Activated CD4-positive, alpha-beta memory T cell treated with anti-CD3 and anti-CD28 coated beads for 36 hours (primary cell): ENCODE measurements at regions of chr12 and their contacts with region 1.

Region 1: GRCh38 chr12:8446642-8447547 is 8.9 kb upstream of the CLEC6A start:
- DNase-seq: peak; percentile 28
- H3K4me3 Mint-ChIP-seq: no peak overlapping the region
- H3K27ac Mint-ChIP-seq: no peak overlapping the region
- H3K4me1 Mint-ChIP-seq: no peaks in the 10 kb centered on the region
- H3K27me3 Mint-ChIP-seq: peaks cover 2% of the 10 kb centered on the region

Region 2: DNA sequence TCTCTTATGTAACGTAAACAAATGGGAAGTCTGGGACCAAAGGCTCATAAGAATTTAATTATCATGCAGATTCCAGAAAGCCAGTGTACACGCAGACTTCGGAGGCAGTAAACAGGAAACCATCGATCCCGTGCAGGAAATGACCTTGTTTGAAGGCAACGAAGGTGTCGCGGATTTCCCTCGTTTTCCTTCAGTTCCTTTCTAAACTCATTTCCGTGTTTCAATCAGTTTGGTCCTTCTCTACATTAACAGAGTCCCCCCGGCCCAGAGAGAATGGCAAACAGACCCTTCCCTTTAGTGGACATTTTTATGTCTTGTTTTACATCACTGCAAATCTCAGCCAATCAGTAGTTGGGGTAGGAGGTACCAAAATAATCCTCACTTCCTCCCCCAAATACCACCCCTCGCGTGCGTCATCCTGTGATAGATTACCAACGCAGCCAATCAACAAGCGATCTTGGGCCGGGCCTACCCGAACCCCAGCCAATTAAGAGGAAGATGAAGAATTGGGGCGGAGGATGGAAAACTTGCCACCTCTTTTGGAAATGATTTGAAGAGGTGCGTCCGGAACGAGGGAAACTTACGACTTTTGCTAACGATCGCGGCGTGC is 420.5 kb before region 1 on chr12:
- CTCF ChIA-PET with region 1: no interaction called
- POLR2A ChIA-PET with region 1: no interaction called
- intact Hi-C with region 1: no loop called
- DNase-seq: peak; percentile 98
- H3K4me3 Mint-ChIP-seq: peak overlapping the region; percentile 88
- H3K27ac Mint-ChIP-seq: peak overlapping the region; percentile 100
- H3K4me1 Mint-ChIP-seq: peaks cover 9% of the 10 kb centered on the region
- H3K27me3 Mint-ChIP-seq: no peaks in the 10 kb centered on the region

Region 3: DNA sequence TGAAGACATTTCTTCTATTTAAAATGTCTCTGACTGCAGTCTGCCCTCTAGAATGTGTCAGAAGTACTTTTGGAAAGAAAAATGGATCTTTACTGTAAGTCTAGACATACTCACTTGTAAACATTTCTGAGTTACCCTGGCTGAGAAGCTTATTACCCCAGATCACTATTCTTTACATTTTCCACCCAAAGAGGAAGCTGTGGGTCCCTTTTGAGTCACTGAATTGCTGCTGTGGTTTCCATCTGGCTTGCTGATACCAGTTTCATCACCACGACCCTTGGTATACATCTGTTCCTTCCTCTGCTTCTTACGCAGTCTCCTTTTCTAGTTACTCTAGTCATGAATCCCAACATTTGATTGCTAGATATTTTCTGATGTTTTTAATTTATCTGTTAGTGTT is 46.2 kb after region 1 on chr12:
- CTCF ChIA-PET with region 1: no interaction called
- POLR2A ChIA-PET with region 1: no interaction called
- intact Hi-C with region 1: loop called (anchors 1 kb)
- DNase-seq: peak; percentile 79
- H3K4me3 Mint-ChIP-seq: no peak overlapping the region
- H3K27ac Mint-ChIP-seq: peak overlapping the region; percentile 56
- H3K4me1 Mint-ChIP-seq: peaks cover 24% of the 10 kb centered on the region
- H3K27me3 Mint-ChIP-seq: peaks cover 3% of the 10 kb centered on the region